Dendritic cell treated with granulocyte-macrophage colony-stimulating factor and Interleukin-4, amounts not matched to agents 40 ng/mL and 50 ng/mL, for 4 days (primary cell): ENCODE measurements at regions of chr1 and their contacts with region 1.

Region 1: DNA sequence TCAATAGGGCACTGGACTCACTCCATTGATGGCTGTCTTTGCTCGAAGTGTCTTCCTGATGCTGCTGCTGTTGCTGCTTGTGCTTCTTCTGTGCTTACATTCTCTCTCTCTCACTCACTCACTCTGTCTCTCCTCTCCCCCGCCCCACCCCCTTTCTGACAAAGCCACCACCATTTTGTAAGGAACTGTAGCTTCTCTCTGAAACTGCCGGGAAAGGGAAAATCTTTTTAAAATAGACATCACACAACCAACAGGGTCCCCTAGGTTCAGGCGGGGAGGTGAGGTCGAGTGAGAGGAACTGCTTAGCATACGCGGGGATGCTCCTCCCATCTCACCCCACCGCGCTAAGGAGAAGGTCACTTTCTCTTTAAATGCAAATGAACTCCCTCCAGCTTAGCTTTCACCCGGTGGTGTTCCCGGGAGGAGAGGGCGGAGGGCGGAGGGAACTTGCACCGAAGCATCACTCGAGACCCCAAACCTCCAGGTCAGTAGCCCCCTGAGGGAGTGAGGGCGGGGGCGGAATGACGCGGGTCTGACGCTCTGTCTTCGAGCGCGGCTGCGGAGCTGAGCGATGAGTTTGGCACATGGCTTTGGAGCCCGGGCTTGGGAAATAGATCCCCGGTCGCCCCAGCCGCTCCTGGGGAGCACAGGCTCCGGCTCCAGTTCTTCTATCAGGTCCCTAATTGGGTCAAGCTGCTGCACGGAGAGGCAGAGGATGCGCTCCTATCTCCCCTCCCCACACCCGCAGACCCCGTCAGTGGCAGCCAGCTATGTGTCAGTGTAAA is at the start of gene CCDC28B:
- H3K4me3 Mint-ChIP-seq: peak within 1 kb of the TSS; percentile 86
- H3K27ac Mint-ChIP-seq: peak within 1 kb of the TSS; percentile 69
- H3K4me1 Mint-ChIP-seq: peaks cover 35% of the 10 kb centered on the region
- H3K27me3 Mint-ChIP-seq: peaks cover 10% of the 10 kb centered on the region

Region 2: GRCh38 chr1:32179443-32180185 is 20.8 kb before region 1 on chr1 and contains the start of gene TXLNA:
- intact Hi-C with region 1: loop called (anchors 2 kb)
- H3K4me3 Mint-ChIP-seq: peak within 1 kb of the TSS; percentile 90
- H3K27ac Mint-ChIP-seq: peak within 1 kb of the TSS; percentile 99
- H3K4me1 Mint-ChIP-seq: peaks cover 47% of the 10 kb centered on the region
- H3K27me3 Mint-ChIP-seq: no peaks in the 10 kb centered on the region

Region 3: DNA sequence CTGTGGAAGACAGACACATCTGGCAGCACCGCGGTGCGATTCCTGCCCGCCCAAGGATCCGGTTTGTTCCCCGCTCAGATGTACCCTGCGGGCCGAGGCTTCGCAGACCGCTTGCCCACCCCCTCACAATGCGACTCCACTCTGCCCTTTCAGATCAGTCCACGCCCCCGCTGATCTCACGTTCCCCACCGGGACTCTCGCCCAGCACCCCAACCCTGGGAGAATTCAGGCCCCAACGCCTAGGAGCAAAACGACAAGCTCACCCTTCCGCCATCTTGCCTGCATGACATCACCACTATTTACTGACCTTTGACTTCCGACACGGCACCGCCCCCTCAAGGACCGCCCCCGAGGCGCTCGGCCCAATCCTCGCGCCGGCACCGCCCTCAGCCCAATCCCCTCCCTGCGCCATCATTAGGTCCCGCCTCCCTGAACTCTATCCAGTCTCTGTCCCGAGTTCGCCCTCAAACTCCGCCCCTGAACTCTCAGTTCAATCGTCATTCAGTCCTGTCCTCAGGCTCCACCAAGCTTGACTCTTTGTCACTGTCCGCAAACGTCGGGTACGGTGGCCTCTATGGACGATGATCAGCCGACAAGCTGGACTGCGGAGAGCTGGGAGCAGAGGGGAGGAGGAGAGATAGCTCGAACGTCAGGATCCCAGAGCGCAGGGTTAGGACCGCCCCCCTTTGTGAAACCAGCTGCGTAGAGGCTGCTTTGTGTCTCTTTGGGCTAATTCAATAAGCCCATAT is 193.9 kb after region 1 on chr1 and contains the start of gene BSDC1:
- intact Hi-C with region 1: loop called (anchors 5 kb)
- H3K4me3 Mint-ChIP-seq: peak within 1 kb of the TSS; percentile 95
- H3K27ac Mint-ChIP-seq: peak within 1 kb of the TSS; percentile 91
- H3K4me1 Mint-ChIP-seq: peaks cover 33% of the 10 kb centered on the region
- H3K27me3 Mint-ChIP-seq: no peaks in the 10 kb centered on the region